GM13976 (cell line): ENCODE measurements at regions of chr1 and their contacts with region 1.

Region 1: GRCh38 chr1:61851849-61852669 is 109.8 kb downstream of the PATJ start:
- DNase-seq: peak; percentile 19
- CTCF ChIP-seq: peak; percentile 58

Region 2: DNA sequence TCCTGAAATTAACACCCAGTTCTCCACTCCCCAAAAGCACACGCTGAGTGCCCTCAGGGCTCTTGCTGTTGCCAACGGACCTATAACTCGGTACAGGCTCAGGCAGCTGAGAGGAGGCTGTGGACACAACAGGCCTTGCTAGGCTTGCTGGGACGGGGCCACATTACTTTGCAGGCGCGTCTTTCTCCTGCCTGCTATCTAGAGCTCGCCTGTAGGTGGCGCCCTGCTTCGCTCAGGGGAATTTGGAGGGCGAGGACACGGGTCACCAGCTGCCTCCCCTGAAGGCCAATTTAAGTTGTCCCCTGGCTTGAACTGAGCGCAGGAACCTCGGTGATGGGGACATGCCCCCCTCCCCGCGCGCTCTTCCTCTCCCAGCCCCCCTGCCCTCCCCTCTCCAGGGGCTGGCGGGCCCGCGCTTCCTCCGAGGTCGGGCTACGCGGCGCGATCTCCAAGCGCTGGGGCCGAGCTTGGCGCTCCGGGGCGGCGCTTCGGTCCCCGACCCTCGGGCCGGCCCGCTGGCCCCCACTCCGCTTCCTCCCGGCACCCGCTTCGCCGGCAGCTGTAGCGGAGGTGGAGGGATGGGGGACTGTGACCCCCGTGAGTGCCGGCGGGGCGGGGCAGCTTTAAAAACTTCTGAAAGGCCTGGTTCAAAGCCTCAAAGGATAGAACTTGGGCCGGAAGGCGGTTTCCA is 802.1 kb before region 1 on chr1:
- in situ Hi-C with region 1: loop called (anchors 25 kb)
- DNase-seq: peak; percentile 81
- CTCF ChIP-seq: peak; percentile 75

Region 3: GRCh38 chr1:61588736-61589672 is 263.1 kb before region 1 on chr1:
- in situ Hi-C with region 1: loop called (anchors 25 kb)
- DNase-seq: peak; percentile 73
- CTCF ChIP-seq: peak; percentile 87